ENCODE measurements at regions of chr14 and their contacts with region 1.

Region 1: GRCh38 chr14:63852817-63853731 is at the start of gene SYNE2:
- DNase-seq: peak in 1 of 2 donors; percentile 86
- H3K4me3 ChIP-seq: peak within 1 kb of the TSS; percentile 84 to 89
- H3K27ac ChIP-seq: peak within 1 kb of the TSS; percentile 89 to 93
- H3K4me1 ChIP-seq: peaks cover 0 to 12% of the 10 kb centered on the region in 2 donors
- H3K27me3 ChIP-seq: no peaks in the 10 kb centered on the region
- CTCF ChIP-seq: peak in 2 of 3 experiments; percentile 32 to 56
- total RNA-seq, gene SYNE2: 518 TPM

Region 2: DNA sequence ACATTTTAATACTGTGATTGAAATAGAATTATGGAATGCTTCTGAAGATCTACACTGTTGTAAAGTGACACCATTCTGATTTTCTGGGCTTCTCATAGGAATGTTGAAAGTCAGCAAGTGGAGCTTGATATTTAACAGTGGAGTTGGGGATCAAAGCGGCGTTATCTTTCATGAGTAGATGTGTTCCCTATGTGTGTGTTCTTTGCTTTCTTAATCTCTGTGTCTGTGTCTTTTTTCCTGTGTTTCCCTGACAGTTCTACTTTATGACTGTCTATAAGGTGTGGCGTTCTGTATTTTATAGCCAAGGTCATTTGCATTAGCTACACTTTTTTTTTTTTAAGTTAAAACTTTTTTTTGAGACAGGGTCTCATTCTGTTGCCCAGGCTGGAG is 24.5 kb after region 1 on chr14:
- intact Hi-C with region 1: loop called (anchors 2 kb)
- DNase-seq: no peak
- H3K4me3 ChIP-seq: peak overlapping the region in 1 of 2 donors; percentile 23
- H3K27ac ChIP-seq: peak overlapping the region; percentile 82 to 94
- H3K4me1 ChIP-seq: peaks cover 20 to 51% of the 10 kb centered on the region in 2 donors
- H3K27me3 ChIP-seq: no peaks in the 10 kb centered on the region
- CTCF ChIP-seq: no peak

Region 3: DNA sequence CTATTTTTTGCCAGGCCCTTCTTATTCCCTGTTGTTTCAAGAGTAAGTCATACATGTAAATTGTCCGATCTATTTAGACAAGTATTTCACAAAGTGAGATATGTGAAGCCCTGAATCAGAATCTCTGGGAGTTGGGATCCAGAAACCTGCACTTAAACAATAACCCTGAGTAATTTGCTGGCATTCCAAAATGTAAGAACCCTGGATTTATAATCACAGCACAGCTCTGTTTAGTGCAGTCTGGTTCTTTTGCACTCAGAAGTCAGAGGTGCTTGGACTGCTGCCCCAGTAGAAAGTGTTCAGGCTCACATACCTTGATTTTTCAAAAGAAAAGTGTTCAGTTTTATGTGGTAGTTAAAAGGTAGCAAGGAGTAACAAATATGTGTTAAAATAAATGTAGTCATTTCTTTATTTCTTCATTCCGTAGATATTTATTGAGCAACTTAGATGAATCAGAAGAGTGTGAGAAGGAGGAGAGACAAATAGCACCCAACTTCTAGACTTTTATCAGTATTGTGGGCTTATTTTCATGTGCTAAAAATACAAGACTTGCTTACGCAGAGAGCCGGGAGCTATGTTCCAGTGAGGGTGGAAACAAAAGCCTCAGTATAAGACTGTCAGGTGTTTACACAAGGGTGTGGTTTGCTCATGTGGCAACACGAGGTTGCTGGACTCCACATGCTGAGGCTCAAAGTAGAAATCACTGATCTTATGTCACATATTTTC is 69.8 kb after region 1 on chr14:
- intact Hi-C with region 1: loop called (anchors 2 kb)
- DNase-seq: peak in 1 of 2 donors; percentile 84
- H3K4me3 ChIP-seq: no peak overlapping the region
- H3K27ac ChIP-seq: peak overlapping the region; percentile 73 to 85
- H3K4me1 ChIP-seq: peaks cover 0 to 16% of the 10 kb centered on the region in 2 donors
- H3K27me3 ChIP-seq: no peaks in the 10 kb centered on the region
- CTCF ChIP-seq: no peak

Region 4: GRCh38 chr14:64478634-64479250 is 625.7 kb after region 1 on chr14:
- intact Hi-C with region 1: no loop called
- DNase-seq: no peak
- H3K4me3 ChIP-seq: no peak overlapping the region
- H3K27ac ChIP-seq: peak overlapping the region in 1 of 2 donors; percentile 18
- H3K4me1 ChIP-seq: no peaks in the 10 kb centered on the region
- H3K27me3 ChIP-seq: no peaks in the 10 kb centered on the region
- CTCF ChIP-seq: peak in 2 of 3 experiments; percentile 48 to 63

Region 5: GRCh38 chr14:65832431-65833266 is 1979.6 kb after region 1 on chr14:
- intact Hi-C with region 1: no loop called
- DNase-seq: no peak
- H3K4me3 ChIP-seq: no peak overlapping the region
- H3K27ac ChIP-seq: no peak overlapping the region
- H3K4me1 ChIP-seq: no peaks in the 10 kb centered on the region
- H3K27me3 ChIP-seq: no peaks in the 10 kb centered on the region
- CTCF ChIP-seq: peak in 1 of 3 experiments; percentile 14